HEK293 (cell line): ENCODE measurements at regions of chr22 and their contacts with region 1.

Region 1: DNA sequence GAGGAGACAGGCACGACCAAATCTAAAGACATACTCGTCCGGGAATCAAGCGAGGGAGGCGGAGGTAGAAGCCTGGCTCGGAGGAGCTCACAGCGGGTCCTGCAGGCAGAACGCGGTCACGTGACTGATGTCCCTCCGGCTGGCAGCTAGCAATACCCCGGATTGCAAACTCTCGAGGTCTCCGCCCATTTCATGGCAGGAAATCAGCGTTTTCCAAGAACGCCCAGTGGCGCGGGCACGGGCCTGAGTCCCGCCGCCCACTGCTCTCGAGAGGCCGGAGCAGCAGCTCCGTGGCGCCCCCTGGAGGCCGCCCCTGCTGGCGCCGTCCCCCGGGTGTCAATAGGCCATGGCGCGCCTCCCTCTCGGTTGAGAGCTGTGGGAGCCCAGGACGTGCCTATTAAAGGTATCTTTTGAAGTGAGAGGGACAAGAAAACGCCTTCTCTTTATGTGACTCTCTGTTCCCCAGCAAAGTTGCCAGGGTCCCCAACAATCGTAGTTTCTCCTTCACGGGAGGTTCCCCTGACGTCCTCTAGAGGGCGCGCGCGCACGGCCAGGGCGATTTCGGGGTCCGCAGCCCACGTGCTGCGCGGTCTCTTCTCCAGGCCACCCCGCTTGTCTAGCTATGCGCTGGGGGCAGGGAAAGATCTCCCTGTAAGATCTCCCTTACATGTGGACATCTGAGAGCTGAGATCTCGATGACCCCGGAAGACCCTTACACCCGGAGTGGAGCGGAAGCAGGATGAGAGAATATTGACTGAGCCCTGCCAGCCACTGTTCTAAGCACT is 37.3 kb upstream of the RBFOX2 start:
- H3K4me3 ChIP-seq: peak overlapping the region; percentile 57
- H3K27ac ChIP-seq: peak overlapping the region; percentile 64
- H3K4me1 ChIP-seq: no peaks in the 10 kb centered on the region
- CTCF ChIP-seq: peak; percentile 100

Region 2: DNA sequence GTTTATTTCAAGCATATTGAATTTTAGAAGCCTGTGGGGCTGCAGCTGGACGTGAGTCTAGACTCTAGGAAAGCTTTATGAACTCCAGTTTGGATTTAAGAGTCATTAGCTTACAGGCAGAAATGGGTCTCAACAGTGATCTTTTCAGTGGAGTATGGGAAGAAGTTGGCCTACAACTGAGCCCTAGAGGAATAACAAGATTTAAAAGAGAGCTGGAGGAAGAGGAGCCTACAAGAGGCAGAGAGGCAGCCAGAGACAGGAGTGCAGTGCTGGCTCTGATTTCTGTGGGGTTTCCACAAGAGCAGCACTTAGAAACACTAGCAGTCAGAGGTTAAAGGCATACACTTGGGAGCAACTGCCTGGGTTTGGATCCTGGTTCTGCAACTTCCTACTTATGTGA is 330.4 kb before region 1 on chr22:
- CTCF ChIA-PET with region 1: no interaction called
- POLR2A ChIA-PET with region 1: no interaction called
- H3K4me3 ChIP-seq: no peak overlapping the region
- H3K27ac ChIP-seq: no peak overlapping the region
- H3K4me1 ChIP-seq: no peaks in the 10 kb centered on the region
- CTCF ChIP-seq: no peak

Region 3: GRCh38 chr22:35802885-35803284 is 263.1 kb before region 1 on chr22:
- CTCF ChIA-PET with region 1: no interaction called
- POLR2A ChIA-PET with region 1: no interaction called
- H3K4me3 ChIP-seq: no peak overlapping the region
- H3K27ac ChIP-seq: no peak overlapping the region
- H3K4me1 ChIP-seq: no peaks in the 10 kb centered on the region; the same call in 1 of the 2 replicates
- CTCF ChIP-seq: no peak

Region 4: GRCh38 chr22:35913925-35914324 is 152.0 kb before region 1 on chr22:
- CTCF ChIA-PET with region 1: interaction called, 11 read pairs
- POLR2A ChIA-PET with region 1: no interaction called
- H3K4me3 ChIP-seq: no peak overlapping the region
- H3K27ac ChIP-seq: peak overlapping the region; percentile 12
- H3K4me1 ChIP-seq: peaks cover 26% of the 10 kb centered on the region
- CTCF ChIP-seq: no peak

Region 5: GRCh38 chr22:35959121-35959800 is 106.7 kb before region 1 on chr22:
- CTCF ChIA-PET with region 1: interaction called, 25 read pairs
- POLR2A ChIA-PET with region 1: interaction called, 4 read pairs
- H3K4me3 ChIP-seq: no peak overlapping the region
- H3K27ac ChIP-seq: no peak overlapping the region
- H3K4me1 ChIP-seq: peaks cover 13% of the 10 kb centered on the region; the same call in 1 of the 2 replicates
- CTCF ChIP-seq: no peak

Region 6: GRCh38 chr22:36010882-36011281 is 55.1 kb before region 1 on chr22:
- CTCF ChIA-PET with region 1: interaction called, 65 read pairs
- POLR2A ChIA-PET with region 1: interaction called, 5 read pairs
- H3K4me3 ChIP-seq: no peak overlapping the region
- H3K27ac ChIP-seq: no peak overlapping the region
- H3K4me1 ChIP-seq: peaks cover 26% of the 10 kb centered on the region
- CTCF ChIP-seq: no peak

Region 7: DNA sequence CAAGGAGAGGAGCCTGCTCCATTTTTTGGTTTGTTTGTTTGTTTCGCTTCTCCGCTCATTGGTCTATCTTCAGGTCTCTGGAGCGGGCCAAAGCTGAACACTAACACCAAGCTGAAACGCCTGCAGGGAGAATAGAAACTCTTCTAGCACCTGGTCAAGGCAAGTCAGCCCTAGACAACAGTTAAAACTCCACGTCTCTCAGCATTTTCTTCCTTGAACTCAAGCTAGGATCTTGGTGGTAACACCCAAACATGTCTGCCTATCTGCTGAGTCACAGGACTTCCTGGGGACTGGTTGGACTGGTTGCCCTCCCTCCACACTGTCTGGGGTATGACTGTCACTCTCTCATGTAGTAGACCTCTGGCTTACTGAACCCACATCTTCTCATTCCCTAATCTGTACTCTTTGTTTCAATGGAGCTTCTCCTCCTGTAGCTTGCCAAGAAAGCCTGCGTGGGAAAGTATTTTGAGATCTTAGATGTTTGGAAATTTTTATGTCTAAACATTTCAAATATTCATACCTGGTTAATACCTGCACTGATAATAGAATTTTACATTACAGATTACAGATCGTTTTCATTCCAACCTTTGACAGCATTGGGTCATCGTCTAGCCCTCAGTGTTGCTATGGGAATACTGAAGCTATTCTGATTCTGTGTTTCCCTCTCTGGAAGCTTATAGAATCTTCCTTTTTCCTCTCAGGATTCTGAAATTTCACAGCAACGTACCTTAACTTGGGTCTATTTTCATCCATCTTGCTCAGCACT is 13.3 kb before region 1 on chr22:
- CTCF ChIA-PET with region 1: interaction called, 86 read pairs
- POLR2A ChIA-PET with region 1: interaction called, 5 read pairs
- H3K4me3 ChIP-seq: no peak overlapping the region
- H3K27ac ChIP-seq: no peak overlapping the region
- H3K4me1 ChIP-seq: 0 out of 2 replicates have a peak, but pooled peaks cover 3% of the 10 kb centered on the region
- CTCF ChIP-seq: no peak

Region 8: DNA sequence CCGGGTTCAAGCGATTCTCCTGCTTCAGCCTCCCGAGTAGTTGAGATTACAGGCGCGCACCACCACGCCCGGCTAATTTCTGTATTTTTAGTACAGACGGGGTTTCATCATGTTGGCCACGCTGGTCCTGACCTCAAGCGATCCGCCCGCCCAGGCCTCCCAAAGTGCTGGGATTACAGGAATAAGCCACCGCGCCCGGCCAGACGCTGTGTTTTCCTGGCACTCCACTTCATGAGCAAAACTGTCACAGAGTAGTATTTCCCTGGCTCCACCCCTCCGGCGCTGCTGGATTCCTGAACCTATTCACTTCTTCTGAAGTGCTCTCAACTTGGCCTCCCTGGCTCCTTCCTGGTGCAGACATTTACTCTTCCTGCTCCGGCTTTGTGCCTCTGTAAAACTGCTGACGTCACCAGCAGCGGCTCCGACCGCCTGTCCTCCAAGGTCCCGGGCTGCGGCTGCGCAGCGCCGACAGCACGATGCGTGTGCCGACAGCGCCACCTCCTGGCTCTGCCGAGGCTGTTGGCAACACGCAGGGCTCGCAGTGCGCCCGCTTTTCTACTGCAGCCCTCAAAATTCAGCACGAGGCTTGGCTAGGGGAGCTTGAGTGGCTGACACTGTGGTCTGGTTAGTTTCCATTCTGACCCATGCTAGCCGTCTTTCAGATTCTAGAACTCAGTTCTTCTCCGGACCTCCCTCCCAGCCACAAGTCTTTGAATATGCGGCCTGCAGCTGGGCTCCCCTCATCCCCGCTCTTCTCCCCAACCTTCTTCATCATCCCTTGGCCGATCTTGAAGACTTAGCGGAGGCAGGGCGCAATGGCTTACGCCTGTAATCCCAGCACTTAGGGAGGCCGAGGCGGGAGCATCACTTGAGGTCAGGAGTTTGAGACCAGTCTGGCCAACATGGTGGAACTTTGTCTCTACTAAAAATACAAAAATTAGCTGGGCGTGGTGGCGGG is 58.0 kb after region 1 on chr22:
- CTCF ChIA-PET with region 1: interaction called, 37 read pairs
- POLR2A ChIA-PET with region 1: interaction called, 3 read pairs
- H3K4me3 ChIP-seq: no peak overlapping the region
- H3K27ac ChIP-seq: no peak overlapping the region
- H3K4me1 ChIP-seq: no peaks in the 10 kb centered on the region; the same call in 1 of the 2 replicates
- CTCF ChIP-seq: peak; percentile 99

Region 9: GRCh38 chr22:36149441-36149840 is 83.5 kb after region 1 on chr22:
- CTCF ChIA-PET with region 1: no interaction called
- POLR2A ChIA-PET with region 1: no interaction called
- H3K4me3 ChIP-seq: no peak overlapping the region
- H3K27ac ChIP-seq: no peak overlapping the region
- H3K4me1 ChIP-seq: no peaks in the 10 kb centered on the region
- CTCF ChIP-seq: no peak